ENCODE measurements at regions of chr1 and their contacts with region 1.

Region 1: GRCh38 chr1:9874959-9875635 is 35.0 kb downstream of the CTNNBIP1 start:
- DNase-seq: peak; percentile 75
- H3K4me3 ChIP-seq: no peak overlapping the region
- H3K27ac ChIP-seq: peak overlapping the region in 2 of 4 donors; percentile 23 to 31
- H3K4me1 ChIP-seq: peaks cover 0 to 21% (median 6%) of the 10 kb centered on the region in 4 donors
- H3K27me3 ChIP-seq: no peaks in the 10 kb centered on the region
- CTCF ChIP-seq: peak; percentile 93 to 97 (median 95)
- EP300 ChIP-seq: no peak
- POLR2A ChIP-seq: no peak

Region 2: DNA sequence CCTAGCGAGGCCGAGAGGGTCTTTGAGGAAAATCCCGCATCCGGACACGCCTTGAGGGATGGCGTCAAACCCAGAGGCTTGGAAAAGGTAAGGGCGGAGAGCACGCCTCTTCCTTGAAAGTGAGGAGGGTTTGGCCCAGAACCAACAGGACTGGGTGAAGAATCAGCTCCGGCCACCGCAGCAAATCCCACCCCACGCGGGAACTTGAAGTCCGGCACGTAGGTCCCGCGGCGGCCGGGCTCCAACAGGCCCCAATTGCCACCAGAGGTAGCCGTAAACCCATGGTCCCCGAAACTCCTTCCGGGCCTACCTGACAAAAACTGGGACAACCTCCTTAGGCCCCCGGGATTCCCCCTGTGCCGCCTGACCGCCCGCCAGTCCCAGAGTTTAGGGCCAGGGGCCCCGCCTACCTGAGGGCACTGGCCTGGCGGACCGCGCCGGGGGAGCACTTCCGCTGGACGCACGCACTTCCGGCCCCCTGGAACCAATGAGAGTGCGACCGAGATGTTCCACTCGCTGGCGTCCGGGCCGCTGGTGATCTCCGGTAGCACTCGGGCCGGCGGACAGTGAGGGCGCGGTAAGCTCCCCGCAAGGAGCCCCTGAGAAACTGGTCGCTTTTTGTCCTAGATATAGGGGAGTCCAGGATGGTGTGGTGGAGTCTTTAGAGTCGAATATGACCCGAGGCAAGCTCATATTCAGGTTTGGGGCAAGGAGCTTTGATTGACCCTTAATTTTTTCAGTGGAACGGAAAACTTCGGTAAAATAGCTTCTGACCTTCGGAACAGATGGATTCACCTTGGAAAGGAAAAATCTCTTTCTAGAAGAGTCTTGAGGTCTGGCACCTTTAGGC is 68.1 kb after region 1 on chr1 and contains the starts of genes LZIC and NMNAT1:
- in situ Hi-C with region 1: loop called in 1 of 4 experiments (anchors 10 kb)
- intact Hi-C with region 1: loop called (anchors 2 kb)
- DNase-seq: peak; percentile 95
- H3K4me3 ChIP-seq: peak within 1 kb of the TSS; percentile 54 to 90 (median 61)
- H3K27ac ChIP-seq: peak within 1 kb of the TSS; percentile 92 to 94 (median 94)
- H3K4me1 ChIP-seq: peaks cover 4 to 26% (median 15%) of the 10 kb centered on the region in 4 donors
- H3K27me3 ChIP-seq: no peaks in the 10 kb centered on the region
- CTCF ChIP-seq: peak in 2 of 5 experiments; percentile 17 to 25
- EP300 ChIP-seq: no peak
- POLR2A ChIP-seq: peak; percentile 97
- total RNA-seq, gene LZIC: 10.7 to 41.0 (median 26.6) TPM
- total RNA-seq, gene NMNAT1: 7.1 to 39.8 (median 17.9) TPM

Region 3: GRCh38 chr1:9985001-9985400 is 109.9 kb after region 1 on chr1:
- in situ Hi-C with region 1: no loop called
- intact Hi-C with region 1: no loop called
- DNase-seq: no peak
- H3K4me3 ChIP-seq: no peak overlapping the region
- H3K27ac ChIP-seq: no peak overlapping the region
- H3K4me1 ChIP-seq: no peaks in the 10 kb centered on the region
- H3K27me3 ChIP-seq: no peaks in the 10 kb centered on the region
- CTCF ChIP-seq: no peak
- EP300 ChIP-seq: no peak
- POLR2A ChIP-seq: no peak

Region 4: DNA sequence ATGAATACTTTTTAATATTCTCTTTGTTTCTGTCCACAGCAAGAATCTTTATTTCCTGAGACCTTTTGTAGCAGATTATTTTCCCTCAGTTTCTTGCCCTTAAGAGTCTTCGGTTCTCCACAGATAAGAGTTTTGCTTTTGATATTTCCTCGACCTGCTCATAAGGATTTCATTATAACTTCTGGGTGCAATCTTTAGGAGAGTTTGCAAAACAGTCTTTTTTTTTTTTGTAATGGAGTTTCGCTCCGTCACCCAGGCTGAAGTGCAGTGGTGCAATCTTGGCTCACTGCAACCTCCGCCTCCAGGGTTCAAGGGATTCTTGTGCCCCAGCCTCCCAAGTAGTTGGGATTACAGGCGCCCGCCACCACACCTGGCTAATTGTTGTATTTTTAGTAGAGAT is 147.6 kb after region 1 on chr1:
- in situ Hi-C with region 1: loop called in 2 of 4 experiments (anchors 10 kb)
- intact Hi-C with region 1: no loop called
- DNase-seq: no peak
- H3K4me3 ChIP-seq: no peak overlapping the region
- H3K27ac ChIP-seq: no peak overlapping the region
- H3K4me1 ChIP-seq: no peaks in the 10 kb centered on the region
- H3K27me3 ChIP-seq: no peaks in the 10 kb centered on the region
- CTCF ChIP-seq: no peak
- EP300 ChIP-seq: no peak
- POLR2A ChIP-seq: no peak

Region 5: DNA sequence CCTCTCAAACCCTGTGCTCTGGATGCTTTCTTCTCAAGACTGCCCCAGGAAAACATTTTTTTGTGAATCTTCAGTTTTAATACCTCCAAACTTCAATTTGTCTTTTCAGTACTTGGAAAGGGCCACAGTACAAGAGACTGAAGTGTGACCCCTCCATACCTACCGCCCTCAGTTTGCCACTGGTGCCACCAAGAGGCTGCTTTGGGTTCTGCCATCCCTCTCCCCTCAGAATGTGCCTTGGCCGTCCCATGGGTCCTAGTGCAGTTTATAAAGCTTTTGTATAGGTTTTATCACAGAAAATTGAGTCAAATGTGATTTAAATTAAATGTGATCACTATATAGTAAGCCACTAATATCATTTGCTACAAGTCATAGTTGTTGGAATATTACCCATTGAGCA is 462.9 kb after region 1 on chr1:
- in situ Hi-C with region 1: no loop called
- intact Hi-C with region 1: loop called (anchors 10 kb)
- DNase-seq: peak; percentile 23
- H3K4me3 ChIP-seq: no peak overlapping the region
- H3K27ac ChIP-seq: no peak overlapping the region
- H3K4me1 ChIP-seq: no peaks in the 10 kb centered on the region
- H3K27me3 ChIP-seq: no peaks in the 10 kb centered on the region
- CTCF ChIP-seq: peak; percentile 53 to 62 (median 61)
- EP300 ChIP-seq: no peak
- POLR2A ChIP-seq: no peak

Region 6: GRCh38 chr1:10415211-10415930 is 540.3 kb after region 1 on chr1:
- in situ Hi-C with region 1: no loop called
- intact Hi-C with region 1: no loop called
- DNase-seq: peak; percentile 15
- H3K4me3 ChIP-seq: no peak overlapping the region
- H3K27ac ChIP-seq: peak overlapping the region; percentile 25 to 56 (median 51)
- H3K4me1 ChIP-seq: no peaks in the 10 kb centered on the region
- H3K27me3 ChIP-seq: no peaks in the 10 kb centered on the region
- CTCF ChIP-seq: no peak
- EP300 ChIP-seq: no peak
- POLR2A ChIP-seq: no peak